GM18951 (cell line): ENCODE measurements at regions of chr6 and their contacts with region 1.

Region 1: DNA sequence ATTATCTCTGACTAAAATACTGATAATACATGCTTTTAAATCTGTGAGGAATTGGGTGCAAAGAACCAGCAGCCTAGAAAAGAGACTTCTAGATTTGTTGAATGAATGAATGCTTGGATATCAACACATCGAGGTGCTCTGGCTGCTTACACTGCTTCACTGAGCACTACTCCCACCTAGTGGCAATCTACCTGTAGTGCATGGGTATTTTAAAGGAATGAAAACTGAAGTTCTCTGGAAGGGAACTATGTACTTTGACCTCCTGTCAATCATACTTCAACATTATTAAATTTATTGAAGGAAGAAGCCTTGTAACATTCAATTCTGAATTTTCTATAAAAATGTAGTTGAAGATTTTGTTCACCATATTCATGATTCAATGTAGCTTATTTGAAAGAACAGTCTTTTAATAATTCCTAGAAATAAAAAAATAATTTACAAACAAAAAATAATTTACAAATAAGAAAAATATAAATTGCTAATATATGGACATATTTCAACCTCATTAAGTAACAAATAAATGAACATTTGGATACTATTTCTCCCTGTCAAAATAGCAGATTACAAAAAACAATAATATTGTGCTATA is 111.2 kb upstream of the MMS22L start:
- POLR2A ChIP-seq: no peak

Region 2: GRCh38 chr6:97068211-97068610 is 326.0 kb before region 1 on chr6:
- in situ Hi-C with region 1: loop called (anchors 10 kb)
- POLR2A ChIP-seq: no peak

Region 3: DNA sequence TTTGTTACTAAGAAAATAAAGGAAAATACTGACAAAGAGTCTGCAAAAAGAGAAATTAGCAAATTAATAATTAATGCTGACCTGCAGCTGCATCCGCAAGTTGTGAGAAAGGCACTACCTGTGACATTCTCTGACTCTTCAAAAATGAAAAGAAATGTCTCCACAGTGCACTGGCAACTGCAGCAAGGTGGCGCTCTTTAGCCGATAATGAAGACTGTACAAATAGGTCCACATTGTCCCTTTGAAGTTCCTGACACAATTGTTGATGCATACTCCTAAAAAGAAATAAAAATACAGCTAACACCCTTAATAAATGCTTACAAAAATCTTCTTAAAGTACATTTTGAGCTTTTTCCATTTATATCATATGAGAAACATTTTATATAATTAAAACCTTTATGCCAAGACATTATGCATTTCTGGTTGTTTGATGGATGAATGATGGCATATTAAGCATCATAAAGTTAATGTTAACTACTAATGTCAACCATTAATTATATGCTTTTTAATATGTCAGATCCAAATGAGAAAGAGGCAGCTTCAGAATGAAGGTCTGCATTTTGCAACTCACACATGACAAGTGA is 207.7 kb before region 1 on chr6:
- in situ Hi-C with region 1: loop called (anchors 10 kb)
- POLR2A ChIP-seq: no peak

Region 4: DNA sequence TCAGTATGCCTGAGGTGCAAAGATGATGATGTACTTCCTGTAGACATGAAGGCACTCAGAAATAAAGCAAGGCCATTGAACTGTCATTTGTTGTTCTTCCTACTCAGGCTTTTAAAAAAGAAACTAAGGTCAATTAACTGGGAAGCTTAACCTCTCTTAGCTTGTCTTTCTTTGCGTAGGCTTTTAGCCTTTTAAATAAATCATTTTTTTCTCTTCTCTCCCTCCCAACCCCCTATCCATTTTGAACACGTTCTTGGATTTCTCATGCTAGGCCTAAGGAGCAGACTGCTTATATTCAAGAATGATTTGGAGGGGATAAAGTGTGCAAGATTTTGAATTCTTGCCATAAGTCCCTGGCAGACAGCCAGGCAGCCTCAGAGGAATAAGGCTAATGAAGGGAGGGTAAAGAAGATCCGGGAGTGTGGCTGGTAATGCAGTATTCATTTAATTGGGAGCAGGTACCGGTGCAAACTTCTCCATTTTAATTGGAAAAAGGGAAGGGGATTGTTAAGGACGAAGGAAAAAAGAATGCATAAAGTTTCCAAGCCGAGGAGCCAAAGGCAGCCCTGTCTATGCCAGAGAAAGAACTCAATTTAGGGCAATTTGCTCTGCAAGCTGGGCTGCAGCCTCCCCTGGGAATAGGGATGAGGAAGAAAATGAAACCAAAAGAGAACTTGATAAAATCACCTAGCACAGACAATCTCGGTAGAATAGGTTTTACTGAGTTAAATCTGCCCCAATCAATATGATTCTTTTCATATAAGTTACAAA is 232.6 kb after region 1 on chr6:
- in situ Hi-C with region 1: no loop called
- POLR2A ChIP-seq: no peak